Right lobe of liver (tissue), 6 donors: ENCODE measurements at regions of chr17 and their contacts with region 1.

Region 1: GRCh38 chr17:59331129-59331928 is at the start of gene YPEL2:
- DNase-seq: peak; percentile 99
- ATAC-seq: peak; percentile 73 to 91 (median 81)
- H3K4me3 ChIP-seq: peak within 1 kb of the TSS; percentile 94 to 95 (median 94)
- H3K27ac ChIP-seq: peak within 1 kb of the TSS; percentile 94 to 98 (median 96)
- H3K4me1 ChIP-seq: peaks cover 0 to 62% (median 29%) of the 10 kb centered on the region in 4 donors
- H3K27me3 ChIP-seq: no peaks in the 10 kb centered on the region
- CTCF ChIP-seq: no peak
- POLR2A ChIP-seq: peak; percentile 90
- total RNA-seq, gene YPEL2: 9.2 to 23.3 (median 15.2) TPM

Region 2: GRCh38 chr17:59372138-59372857 is 41.0 kb after region 1 on chr17:
- intact Hi-C with region 1: loop called in 1 of 2 experiments (anchors 5 kb)
- DNase-seq: no peak
- ATAC-seq: peak; percentile 51 to 63 (median 54)
- H3K4me3 ChIP-seq: no peak overlapping the region
- H3K27ac ChIP-seq: peak overlapping the region; percentile 65 to 78 (median 70)
- H3K4me1 ChIP-seq: peaks cover 0 to 69% (median 38%) of the 10 kb centered on the region in 4 donors
- H3K27me3 ChIP-seq: no peaks in the 10 kb centered on the region
- CTCF ChIP-seq: no peak
- POLR2A ChIP-seq: peak; percentile 37

Region 3: GRCh38 chr17:59435238-59435637 is 103.9 kb after region 1 on chr17:
- intact Hi-C with region 1: loop called (anchors 5 to 10 kb)
- DNase-seq: no peak
- ATAC-seq: peak; percentile 47 to 65 (median 58)
- H3K4me3 ChIP-seq: no peak overlapping the region
- H3K27ac ChIP-seq: peak overlapping the region; percentile 28 to 65 (median 41)
- H3K4me1 ChIP-seq: peaks cover 0 to 47% (median 23%) of the 10 kb centered on the region in 4 donors
- H3K27me3 ChIP-seq: no peaks in the 10 kb centered on the region
- CTCF ChIP-seq: no peak
- POLR2A ChIP-seq: no peak

Region 4: DNA sequence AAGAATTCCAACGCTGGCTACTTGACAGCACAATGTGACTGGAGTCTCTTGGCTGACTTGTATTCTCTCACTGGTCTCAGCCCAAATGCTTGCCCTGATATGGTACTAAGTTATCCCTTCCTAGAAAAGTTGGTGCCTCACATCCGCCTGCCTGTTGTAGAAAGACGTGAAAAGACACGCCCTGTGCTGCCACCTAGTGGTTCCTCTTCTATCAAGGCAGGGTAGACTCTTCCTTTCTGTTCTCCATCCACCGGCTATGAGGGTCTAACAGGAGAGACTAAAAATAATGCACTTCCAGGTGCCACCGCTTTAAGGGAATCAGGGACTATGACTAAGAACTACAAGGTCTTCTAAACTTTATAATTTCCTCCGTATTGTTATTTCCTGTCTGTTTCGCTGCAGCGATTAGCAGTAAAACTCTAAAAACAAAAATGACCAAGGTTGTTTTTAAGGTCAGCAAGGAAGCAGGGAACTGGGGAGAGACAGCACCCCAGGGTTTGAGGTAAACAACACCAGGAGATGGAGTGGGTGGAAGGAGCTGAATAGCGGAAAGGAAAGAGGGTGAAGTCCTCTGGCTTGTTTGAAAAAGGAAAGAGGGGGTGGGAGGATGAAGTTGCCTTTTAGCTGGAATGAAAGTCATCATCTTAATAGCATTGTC is 109.6 kb after region 1 on chr17:
- intact Hi-C with region 1: loop called (anchors 5 to 10 kb)
- DNase-seq: peak; percentile 82 to 89 (median 83)
- ATAC-seq: peak; percentile 91 to 96 (median 95)
- H3K4me3 ChIP-seq: no peak overlapping the region
- H3K27ac ChIP-seq: peak overlapping the region; percentile 24 to 58 (median 30)
- H3K4me1 ChIP-seq: peaks cover 0 to 22% (median 13%) of the 10 kb centered on the region in 4 donors
- H3K27me3 ChIP-seq: no peaks in the 10 kb centered on the region
- CTCF ChIP-seq: peak; percentile 85 to 91 (median 88)
- POLR2A ChIP-seq: no peak